ENCODE measurements at regions of chr3 and their contacts with region 1.

Region 1: DNA sequence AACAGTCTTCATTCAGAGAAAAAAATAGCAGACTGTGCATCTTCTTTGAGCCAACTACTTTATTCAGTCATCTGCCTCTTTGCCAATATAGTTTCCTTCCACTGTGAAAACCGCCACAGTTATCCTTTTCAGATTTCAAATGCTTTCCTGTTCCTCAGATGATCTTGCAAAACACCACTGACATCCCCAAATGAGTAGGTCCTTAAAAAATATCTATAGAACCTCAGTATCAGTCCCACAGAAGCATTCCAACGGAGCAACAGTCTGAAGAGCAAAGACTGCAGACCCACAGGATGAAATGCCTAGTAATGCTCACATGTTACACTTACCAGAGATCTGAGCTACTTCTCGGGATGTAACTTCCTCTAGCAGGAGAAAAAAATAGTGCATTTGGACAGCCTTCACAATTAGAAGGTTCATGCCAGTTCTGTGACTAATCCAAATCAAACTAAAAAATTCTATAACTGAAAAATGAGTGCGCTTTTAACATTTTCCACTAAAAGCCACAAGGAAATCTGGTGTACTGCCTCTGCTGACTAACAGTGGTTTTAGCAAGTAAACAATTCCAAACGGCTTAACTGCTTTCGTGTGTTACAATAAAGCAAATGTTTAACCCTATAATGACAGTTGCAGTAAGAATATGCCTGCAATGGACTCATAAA is at the start of gene ANKRD28:
- DNase-seq: peak; percentile 89
- H3K4me3 ChIP-seq: peak within 1 kb of the TSS; percentile 44 to 70 (median 59)
- H3K27ac ChIP-seq: peak within 1 kb of the TSS; percentile 100
- H3K4me1 ChIP-seq: peaks cover 4% of the 10 kb centered on the region
- H3K27me3 ChIP-seq: no peaks in the 10 kb centered on the region
- CTCF ChIP-seq: peak; percentile 13 to 34
- total RNA-seq, gene ANKRD28: 38.0 to 49.2 TPM

Region 2: DNA sequence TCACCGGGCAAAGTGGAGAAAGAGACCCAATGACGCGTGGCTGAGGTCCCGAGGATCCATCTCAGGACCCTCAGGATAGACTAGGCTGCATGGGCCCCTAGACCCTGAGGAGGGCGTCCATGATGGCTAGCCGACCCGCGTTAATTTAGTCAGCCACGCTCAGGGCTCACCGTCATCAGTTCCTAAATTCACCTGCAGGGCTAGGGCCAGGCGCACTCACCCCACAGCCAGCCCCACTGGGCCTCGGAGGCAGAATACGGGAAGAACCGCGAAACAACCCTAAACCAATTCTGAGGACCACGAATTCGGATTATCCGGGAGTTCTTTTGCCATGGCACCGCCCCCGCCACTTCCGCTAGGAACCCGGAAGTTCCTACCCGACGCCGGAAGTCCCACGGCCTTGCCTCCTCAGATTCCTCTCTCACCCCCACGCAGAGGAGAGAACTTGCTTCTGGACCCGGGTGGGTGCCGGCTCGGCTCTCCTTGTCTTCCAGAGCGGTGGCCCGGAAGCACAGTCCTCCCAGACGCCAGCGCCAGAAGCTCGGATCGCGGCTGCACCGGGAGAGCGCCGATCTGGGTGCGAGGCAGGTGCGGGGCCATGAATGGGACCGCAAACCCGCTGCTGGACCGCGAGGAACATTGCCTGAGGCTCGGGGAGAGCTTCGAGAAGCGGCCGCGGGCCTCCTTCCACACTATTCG is 370.4 kb before region 1 on chr3 and contains the starts of genes EAF1 and METTL6:
- CTCF ChIA-PET with region 1: no interaction called
- dilution Hi-C with region 1: no loop called
- in situ Hi-C with region 1: no loop called
- intact Hi-C with region 1: no loop called
- DNase-seq: peak; percentile 73
- H3K4me3 ChIP-seq: peak within 1 kb of the TSS; percentile 60 to 89 (median 77)
- H3K27ac ChIP-seq: peak within 1 kb of the TSS; percentile 87
- H3K4me1 ChIP-seq: peaks cover 16% of the 10 kb centered on the region
- H3K27me3 ChIP-seq: no peaks in the 10 kb centered on the region
- CTCF ChIP-seq: peak; percentile 4 to 22
- total RNA-seq, gene EAF1: 23.4 to 40.3 TPM
- total RNA-seq, gene METTL6: 19.7 to 21.5 TPM

Region 3: GRCh38 chr3:15708882-15709677 is 88.7 kb before region 1 on chr3:
- CTCF ChIA-PET with region 1: no interaction called
- dilution Hi-C with region 1: no loop called
- in situ Hi-C with region 1: no loop called
- intact Hi-C with region 1: loop called (anchors 5 kb)
- DNase-seq: peak; percentile 47
- H3K4me3 ChIP-seq: no peak overlapping the region
- H3K27ac ChIP-seq: no peak overlapping the region
- H3K4me1 ChIP-seq: no peaks in the 10 kb centered on the region
- H3K27me3 ChIP-seq: no peaks in the 10 kb centered on the region
- CTCF ChIP-seq: no peak

Region 4: GRCh38 chr3:15726043-15726442 is 71.7 kb before region 1 on chr3:
- CTCF ChIA-PET with region 1: interaction called, 22 read pairs
- dilution Hi-C with region 1: no loop called
- in situ Hi-C with region 1: no loop called
- intact Hi-C with region 1: no loop called
- DNase-seq: peak; percentile 46
- H3K4me3 ChIP-seq: no peak overlapping the region
- H3K27ac ChIP-seq: peak overlapping the region; percentile 59
- H3K4me1 ChIP-seq: peaks cover 17% of the 10 kb centered on the region
- H3K27me3 ChIP-seq: no peaks in the 10 kb centered on the region
- CTCF ChIP-seq: no peak

Region 5: DNA sequence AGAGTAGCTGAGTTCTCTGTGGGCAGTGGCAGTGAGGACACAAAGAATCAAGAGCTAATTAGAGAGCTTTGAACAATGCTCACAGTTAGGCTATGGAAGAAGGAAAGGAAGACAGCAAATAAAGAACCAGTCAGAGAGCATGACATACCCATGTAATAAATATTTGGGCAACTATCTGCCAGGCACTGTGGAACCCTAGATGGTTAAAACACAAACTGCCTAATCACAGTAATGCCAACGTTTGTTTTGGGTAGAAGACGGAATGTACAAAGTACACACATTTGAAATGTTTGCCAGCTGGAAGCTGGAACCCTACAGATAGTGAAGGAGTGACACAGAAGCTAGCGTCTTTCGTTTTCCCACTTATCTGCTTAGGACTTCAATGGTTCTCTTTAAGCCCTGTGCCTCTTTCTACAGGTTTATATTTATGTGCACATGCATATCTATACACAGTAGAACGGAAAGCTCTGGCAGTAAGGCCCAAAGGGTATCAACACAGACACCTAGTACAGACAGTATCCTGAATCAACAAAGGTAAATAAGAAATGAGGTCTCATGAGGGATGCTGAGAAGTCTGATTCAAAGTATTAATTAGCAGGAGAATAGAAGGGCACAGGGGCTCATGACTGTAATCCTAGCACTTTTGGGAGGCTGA is 44.6 kb before region 1 on chr3:
- CTCF ChIA-PET with region 1: no interaction called
- dilution Hi-C with region 1: no loop called
- in situ Hi-C with region 1: no loop called
- intact Hi-C with region 1: loop called (anchors 5 kb)
- DNase-seq: no peak
- H3K4me3 ChIP-seq: no peak overlapping the region
- H3K27ac ChIP-seq: peak overlapping the region; percentile 79
- H3K4me1 ChIP-seq: peaks cover 10% of the 10 kb centered on the region
- H3K27me3 ChIP-seq: no peaks in the 10 kb centered on the region
- CTCF ChIP-seq: no peak

Region 6: DNA sequence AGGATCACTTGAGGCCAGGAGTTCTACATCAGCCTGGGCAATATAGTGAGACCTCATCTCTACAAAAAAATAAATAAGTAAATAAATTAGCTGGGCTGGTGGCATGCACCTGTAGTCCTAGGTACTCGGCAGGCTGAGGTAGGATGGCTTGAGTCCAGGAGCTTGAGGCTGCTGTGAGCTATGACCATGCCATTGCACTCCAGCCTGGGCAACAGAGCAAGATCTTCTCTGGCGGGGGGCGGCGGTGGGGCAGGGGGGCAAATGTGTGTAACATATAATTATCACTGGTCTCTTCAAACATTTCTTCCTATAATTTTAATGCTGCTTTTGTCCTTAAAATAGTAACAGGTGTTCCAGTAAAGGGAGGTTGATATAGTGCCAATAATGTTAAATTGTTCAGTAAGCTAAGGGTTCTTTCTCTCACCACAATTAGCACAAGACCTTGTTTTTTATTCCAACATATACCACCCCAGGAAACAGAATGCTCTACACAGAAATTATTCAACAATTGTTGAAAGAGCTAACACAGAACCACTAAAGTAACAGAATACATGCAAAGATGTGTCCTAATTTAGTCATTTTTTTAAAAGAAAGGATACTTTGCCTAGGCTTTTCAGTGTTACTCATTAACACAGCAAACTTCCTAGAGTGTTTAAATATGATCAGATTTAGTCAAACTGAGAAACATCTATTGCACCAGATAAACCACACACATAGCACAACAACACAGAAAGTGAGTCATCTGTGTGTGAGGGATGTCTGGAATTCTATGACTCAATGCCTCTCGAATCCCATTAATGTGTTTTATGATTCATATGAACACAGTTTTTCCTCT is 29.1 kb before region 1 on chr3:
- CTCF ChIA-PET with region 1: no interaction called
- dilution Hi-C with region 1: no loop called
- in situ Hi-C with region 1: no loop called
- intact Hi-C with region 1: loop called (anchors 2 kb)
- DNase-seq: peak; percentile 94
- H3K4me3 ChIP-seq: peak overlapping the region in 1 of 3 experiments; percentile 20
- H3K27ac ChIP-seq: peak overlapping the region; percentile 79
- H3K4me1 ChIP-seq: peaks cover 24% of the 10 kb centered on the region
- H3K27me3 ChIP-seq: no peaks in the 10 kb centered on the region
- CTCF ChIP-seq: no peak

Measured in mammary epithelial cell (primary cell).